ENCODE measurements at regions of chr12 and their contacts with region 1.

Region 1: GRCh38 chr12:75954041-75954440 is 77.5 kb downstream of the PHLDA1 start:
- DNase-seq: peak in 2 of 3 donors; percentile 50 to 72
- H3K4me3 ChIP-seq: no peak overlapping the region
- H3K4me3 Mint-ChIP-seq: no peak overlapping the region
- H3K27ac ChIP-seq: no peak overlapping the region
- H3K27ac Mint-ChIP-seq: no peak overlapping the region
- H3K4me1 ChIP-seq: no peaks in the 10 kb centered on the region
- H3K4me1 Mint-ChIP-seq: no peaks in the 10 kb centered on the region
- H3K27me3 ChIP-seq: no peaks in the 10 kb centered on the region
- H3K27me3 Mint-ChIP-seq: peaks cover 3 to 7% (median 6%) of the 10 kb centered on the region in 3 donors
- CTCF ChIP-seq: no peak

Region 2: DNA sequence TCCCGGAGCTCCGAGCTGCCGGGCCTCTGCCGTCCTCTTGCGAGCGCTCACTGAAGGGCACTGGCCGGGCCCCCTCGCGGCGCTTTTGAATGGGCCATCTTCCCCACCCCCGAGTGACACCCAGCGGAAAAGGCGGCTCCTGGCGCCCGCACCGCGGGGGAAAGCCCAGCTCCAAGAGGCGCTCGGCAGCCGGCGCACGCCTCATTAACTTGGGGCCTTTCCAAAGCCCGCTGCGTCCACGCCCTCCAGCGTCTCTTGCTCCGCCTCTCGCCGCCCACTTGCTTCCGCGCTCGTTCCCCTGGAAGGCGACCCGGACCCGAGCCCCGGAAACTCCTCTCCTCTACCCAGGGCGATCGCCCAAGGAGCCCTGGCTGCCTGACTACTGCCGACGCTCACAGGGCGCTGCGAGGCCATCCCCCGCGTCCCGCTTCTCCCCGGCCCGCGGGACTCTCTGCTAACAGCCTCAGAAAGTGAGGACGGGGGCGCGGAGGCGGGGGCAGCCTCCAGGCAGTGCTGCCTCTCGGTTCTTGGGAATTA is 77.6 kb after region 1 on chr12 and contains the start of gene PHLDA1:
- intact Hi-C with region 1: loop called in 1 of 2 experiments (anchors 10 kb)
- DNase-seq: peak; percentile 90 to 94 (median 92)
- H3K4me3 ChIP-seq: peak within 1 kb of the TSS; percentile 60 to 77 (median 64)
- H3K4me3 Mint-ChIP-seq: peak within 1 kb of the TSS; percentile 96 to 97
- H3K27ac ChIP-seq: peak within 1 kb of the TSS; percentile 11 to 73
- H3K27ac Mint-ChIP-seq: peak within 1 kb of the TSS; percentile 54 to 91 (median 86)
- H3K4me1 ChIP-seq: peaks cover 27 to 29% of the 10 kb centered on the region in 2 donors
- H3K4me1 Mint-ChIP-seq: peaks cover 23% of the 10 kb centered on the region
- H3K27me3 ChIP-seq: peaks cover 36 to 58% of the 10 kb centered on the region in 2 donors
- H3K27me3 Mint-ChIP-seq: peaks cover 54 to 67% (median 58%) of the 10 kb centered on the region in 3 donors
- CTCF ChIP-seq: peak; percentile 67
- polyA plus RNA-seq, gene PHLDA1: 1.1 to 5.8 (median 1.6) TPM

Region 3: DNA sequence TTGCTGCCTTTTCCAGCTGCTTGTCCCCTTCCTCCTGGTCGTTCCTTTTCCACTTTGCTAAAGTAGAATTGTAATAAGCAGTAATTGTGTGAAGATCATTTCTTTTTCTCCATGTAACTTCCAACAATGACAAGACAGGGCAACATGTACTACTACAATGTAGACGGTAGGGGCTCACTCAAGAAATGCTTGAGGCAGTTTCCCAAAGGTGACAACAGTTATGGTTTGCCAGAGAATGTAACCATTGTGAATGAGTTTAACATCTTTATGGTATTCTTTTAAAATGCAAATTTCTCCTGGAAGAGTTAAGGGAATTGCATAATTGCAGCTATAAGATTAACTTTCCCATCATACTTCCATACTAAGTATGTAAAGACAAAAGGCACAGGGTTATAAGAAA is 101.4 kb after region 1 on chr12:
- intact Hi-C with region 1: no loop called
- DNase-seq: no peak
- H3K4me3 ChIP-seq: no peak overlapping the region
- H3K4me3 Mint-ChIP-seq: no peak overlapping the region
- H3K27ac ChIP-seq: no peak overlapping the region
- H3K27ac Mint-ChIP-seq: peak overlapping the region in 2 of 7 donors; percentile 29 to 31
- H3K4me1 ChIP-seq: no peaks in the 10 kb centered on the region
- H3K4me1 Mint-ChIP-seq: peaks cover 3% of the 10 kb centered on the region
- H3K27me3 ChIP-seq: no peaks in the 10 kb centered on the region
- H3K27me3 Mint-ChIP-seq: no peaks in the 10 kb centered on the region
- CTCF ChIP-seq: no peak

Measured in CD14-positive monocyte (primary cell).